ENCODE measurements at regions of chr7 and their contacts with region 1.

Region 1: DNA sequence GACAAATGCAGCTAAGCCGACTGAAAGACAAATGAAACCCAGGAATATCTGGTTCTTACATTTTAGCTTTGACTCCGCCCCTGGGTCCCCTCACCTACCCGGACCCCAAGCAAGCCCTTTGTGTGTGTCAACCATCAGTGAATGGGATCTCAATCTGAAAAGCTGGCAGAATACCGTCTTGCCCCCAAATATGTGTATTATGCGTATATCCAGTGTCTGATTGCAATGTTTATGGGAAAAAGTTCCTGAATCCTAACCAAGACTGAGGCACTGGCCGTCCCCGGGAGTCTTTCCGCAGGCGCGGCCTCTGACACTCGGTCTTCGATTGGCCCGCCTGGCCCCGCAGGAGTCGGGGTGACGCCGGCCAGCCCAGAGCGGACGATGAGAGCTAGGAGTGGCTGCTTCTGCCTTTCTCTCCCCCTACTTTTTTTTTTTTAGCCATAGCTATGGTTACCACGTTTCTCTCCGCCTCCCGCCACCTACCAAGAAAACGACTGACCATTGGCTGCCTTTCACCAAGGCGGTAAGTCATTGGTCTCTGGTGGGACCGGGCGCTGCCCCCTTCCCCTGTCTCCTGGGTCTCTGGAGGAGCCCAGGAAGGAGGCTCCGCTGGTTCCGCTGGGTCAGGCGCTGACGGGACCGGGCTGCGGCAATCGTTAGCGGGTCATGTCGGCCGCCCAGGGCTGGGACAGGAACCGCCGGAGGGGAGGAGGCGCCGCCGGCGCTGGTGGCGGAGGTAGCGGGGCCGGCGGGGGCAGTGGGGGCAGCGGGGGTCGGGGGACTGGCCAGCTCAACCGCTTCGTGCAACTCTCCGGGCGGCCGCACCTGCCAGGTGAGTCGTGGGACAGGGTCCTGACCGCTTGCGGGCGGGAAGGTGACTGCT is at the start of gene KLHDC10:
- DNase-seq: peak; percentile 97
- H3K4me3 ChIP-seq: peak within 1 kb of the TSS; percentile 92 to 100 (median 93)
- H3K27ac ChIP-seq: peak within 1 kb of the TSS; percentile 92 to 96 (median 94)
- H3K4me1 ChIP-seq: peaks cover 16 to 48% (median 24%) of the 10 kb centered on the region in 4 donors
- H3K27me3 ChIP-seq: no peaks in the 10 kb centered on the region
- CTCF ChIP-seq: no peak
- EP300 ChIP-seq: no peak
- POLR2A ChIP-seq: peak; percentile 61
- total RNA-seq, gene KLHDC10: 9.4 to 23.5 (median 15.6) TPM

Region 2: DNA sequence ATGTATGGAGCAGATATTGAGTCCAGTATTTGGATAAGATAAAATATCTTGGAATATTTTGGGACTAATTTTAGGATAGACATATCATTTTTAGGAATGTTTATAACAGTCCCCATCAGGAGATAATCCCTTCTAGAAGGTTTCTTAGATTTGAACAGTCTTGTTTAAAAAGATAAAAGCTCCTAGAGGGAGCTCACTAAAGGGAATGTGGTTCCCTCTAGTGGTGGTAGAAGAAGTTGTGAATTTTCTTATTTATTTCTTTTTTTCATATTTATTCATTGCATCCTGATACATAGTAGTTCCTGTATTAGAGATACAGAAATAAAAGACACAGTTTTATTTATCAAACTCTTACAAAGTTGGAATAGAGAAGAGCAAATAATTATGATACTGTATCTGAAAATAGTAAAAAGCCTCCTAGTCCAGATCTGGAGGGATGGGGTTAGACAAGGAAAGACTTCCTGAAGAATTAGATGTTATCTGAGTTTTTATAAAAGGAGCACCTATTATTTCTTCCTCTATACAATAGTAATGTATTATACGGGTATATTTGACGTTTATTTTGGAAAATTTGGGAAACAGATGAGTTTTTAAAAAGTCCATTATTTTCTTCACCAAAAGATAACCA is 688.3 kb after region 1 on chr7:
- in situ Hi-C with region 1: loop called (anchors 10 to 25 kb)
- intact Hi-C with region 1: no loop called
- DNase-seq: no peak
- H3K4me3 ChIP-seq: no peak overlapping the region
- H3K27ac ChIP-seq: no peak overlapping the region
- H3K4me1 ChIP-seq: no peaks in the 10 kb centered on the region
- H3K27me3 ChIP-seq: no peaks in the 10 kb centered on the region
- CTCF ChIP-seq: peak; percentile 52 to 80 (median 71)
- EP300 ChIP-seq: no peak
- POLR2A ChIP-seq: no peak

Region 3: DNA sequence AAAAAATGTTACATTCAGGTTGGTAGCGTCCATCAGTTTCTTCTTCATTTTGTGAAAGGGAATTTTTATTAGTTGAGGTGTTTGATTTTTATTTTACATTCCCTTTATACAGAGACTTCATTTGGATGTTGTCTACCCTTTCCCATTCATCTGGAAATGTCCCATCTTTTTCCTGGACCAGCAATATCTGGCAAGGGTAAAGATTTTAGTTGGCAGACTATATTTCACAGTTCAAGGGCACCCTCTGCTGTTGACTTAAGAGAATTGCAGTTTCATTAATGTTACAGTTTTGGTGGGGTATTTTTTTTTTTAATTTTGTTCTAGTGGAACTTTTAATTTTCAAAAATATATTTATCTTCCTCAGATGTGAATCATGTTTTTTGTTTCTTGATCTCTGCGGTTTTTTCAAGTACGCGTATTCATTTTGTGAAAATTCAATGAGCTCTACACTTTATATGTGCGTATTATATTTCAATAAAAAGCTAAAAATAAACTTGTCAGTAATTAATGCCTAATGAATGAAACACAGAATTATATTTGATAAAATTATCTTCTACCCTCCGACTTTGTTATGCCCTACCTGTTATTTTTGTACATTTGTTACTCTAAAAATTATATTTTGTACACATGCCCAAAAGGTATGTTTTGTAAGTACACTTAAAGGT is 761.7 kb after region 1 on chr7:
- in situ Hi-C with region 1: loop called in 2 of 4 experiments (anchors 25 kb)
- intact Hi-C with region 1: no loop called
- DNase-seq: no peak
- H3K4me3 ChIP-seq: no peak overlapping the region
- H3K27ac ChIP-seq: no peak overlapping the region
- H3K4me1 ChIP-seq: no peaks in the 10 kb centered on the region
- H3K27me3 ChIP-seq: no peaks in the 10 kb centered on the region
- CTCF ChIP-seq: peak; percentile 68 to 74 (median 74)
- EP300 ChIP-seq: no peak
- POLR2A ChIP-seq: no peak

Measured in transverse colon (tissue), 4 donors.